Esophagus muscularis mucosa (tissue), 4 donors: ENCODE measurements at regions of chr2 and their contacts with region 1.

Region 1: DNA sequence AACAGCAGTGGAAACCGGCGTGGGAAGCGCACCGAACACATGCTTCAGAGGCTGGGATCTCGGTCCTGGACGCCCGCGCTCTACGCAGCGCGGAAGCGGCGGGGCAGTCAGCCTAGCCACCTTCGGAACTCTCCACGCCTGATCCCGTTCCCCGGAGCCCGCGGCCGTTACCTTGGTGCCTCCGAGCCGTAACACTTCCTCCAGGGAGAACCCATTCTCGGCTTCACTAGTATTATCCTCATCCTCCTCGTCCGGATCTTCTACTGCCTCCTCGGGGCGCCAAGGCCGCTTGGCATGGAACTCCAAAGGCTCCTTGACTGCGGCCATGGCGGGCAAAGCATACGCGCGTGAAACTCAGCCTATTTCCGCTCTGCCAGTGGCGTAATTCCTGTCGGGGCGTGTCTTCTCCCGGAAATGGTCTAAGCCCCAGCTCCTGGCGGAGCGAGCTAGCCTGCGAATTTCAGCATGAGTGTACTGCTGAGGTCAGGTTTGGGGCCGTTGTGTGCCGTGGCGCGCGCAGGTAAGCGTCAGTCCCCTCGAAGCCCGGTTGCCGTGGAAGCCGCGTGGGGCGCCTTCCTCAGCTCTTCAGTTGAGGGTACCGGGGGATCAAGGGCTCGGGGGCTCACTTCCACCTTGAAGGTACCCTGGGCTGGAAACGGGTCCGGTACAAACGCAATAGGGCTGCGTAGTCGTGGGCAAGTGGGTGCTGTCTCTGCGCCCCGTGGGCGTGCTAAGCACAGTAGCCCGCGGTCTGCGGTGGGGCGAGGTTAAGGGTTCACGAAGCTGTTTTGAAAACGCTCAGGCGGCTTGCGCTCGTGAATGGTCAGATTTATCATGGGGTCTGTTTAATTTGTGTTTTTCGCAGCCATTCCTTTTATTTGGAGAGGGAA is at the starts of genes CEBPZ and NDUFAF7:
- DNase-seq: peak; percentile 98
- H3K4me3 ChIP-seq: peak within 1 kb of the TSS; percentile 85 to 96 (median 91)
- H3K27ac ChIP-seq: peak within 1 kb of the TSS; percentile 89 to 95 (median 94)
- H3K4me1 ChIP-seq: peaks cover 24 to 47% (median 39%) of the 10 kb centered on the region in 4 donors
- H3K27me3 ChIP-seq: no peaks in the 10 kb centered on the region
- CTCF ChIP-seq: no peak
- EP300 ChIP-seq: no peak
- POLR2A ChIP-seq: no peak
- total RNA-seq, gene CEBPZ: 22.4 to 34.5 (median 30.0) TPM
- total RNA-seq, gene NDUFAF7: 12.3 to 16.3 (median 13.4) TPM

Region 2: GRCh38 chr2:37156857-37157714 is 74.4 kb before region 1 on chr2 and contains the start of gene EIF2AK2:
- intact Hi-C with region 1: loop called (anchors 5 kb)
- DNase-seq: no peak
- H3K4me3 ChIP-seq: peak within 1 kb of the TSS; percentile 70 to 100 (median 90)
- H3K27ac ChIP-seq: peak within 1 kb of the TSS; percentile 86 to 95 (median 92)
- H3K4me1 ChIP-seq: peaks cover 11 to 31% (median 23%) of the 10 kb centered on the region in 4 donors
- H3K27me3 ChIP-seq: no peaks in the 10 kb centered on the region
- CTCF ChIP-seq: no peak
- EP300 ChIP-seq: no peak
- POLR2A ChIP-seq: no peak
- total RNA-seq, gene EIF2AK2: 23.7 to 28.4 (median 27.8) TPM

Region 3: DNA sequence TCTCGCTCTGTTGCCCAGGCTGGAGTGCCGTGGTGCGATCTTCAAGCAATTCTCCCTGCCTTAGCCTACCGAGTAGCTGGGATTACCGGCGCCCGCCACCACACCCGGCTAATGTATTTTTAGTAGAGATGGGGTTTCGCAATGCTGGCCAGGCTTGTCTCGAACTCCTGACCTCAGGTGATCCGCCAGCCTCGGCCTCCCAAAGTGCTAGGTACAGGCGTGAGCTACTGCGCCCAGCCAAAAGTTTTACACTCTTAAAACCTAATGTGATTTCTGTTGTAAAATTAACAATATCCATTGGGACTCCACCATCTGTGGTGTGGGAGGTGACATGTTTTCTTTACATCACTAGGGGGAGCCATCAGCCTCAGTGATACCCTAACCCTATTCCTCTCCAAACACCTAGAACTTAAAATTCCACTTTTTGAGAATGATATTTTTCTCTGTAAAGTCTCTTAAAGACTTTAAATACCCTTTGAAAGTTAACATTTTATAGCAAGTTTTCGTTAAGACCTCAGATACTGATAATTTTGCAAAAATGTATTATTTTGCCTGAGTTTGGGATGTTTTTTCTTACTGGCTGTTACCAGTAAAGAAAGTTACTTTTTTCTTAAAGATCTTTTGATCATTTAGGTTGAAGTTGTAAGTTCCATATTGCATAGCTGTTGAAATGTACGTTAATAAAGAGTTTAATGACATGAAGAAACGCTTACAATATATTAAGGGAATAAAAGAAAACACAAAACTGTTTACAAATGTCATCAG is 63.1 kb before region 1 on chr2:
- intact Hi-C with region 1: no loop called
- DNase-seq: no peak
- H3K4me3 ChIP-seq: no peak overlapping the region
- H3K27ac ChIP-seq: no peak overlapping the region
- H3K4me1 ChIP-seq: no peaks in the 10 kb centered on the region
- H3K27me3 ChIP-seq: no peaks in the 10 kb centered on the region
- CTCF ChIP-seq: peak; percentile 45 to 65 (median 49)
- EP300 ChIP-seq: no peak
- POLR2A ChIP-seq: no peak

Region 4: GRCh38 chr2:37196320-37197195 is 34.9 kb before region 1 on chr2 and contains the start of gene CEBPZOS:
- intact Hi-C with region 1: loop called (anchors 5 kb)
- DNase-seq: peak; percentile 94
- H3K4me3 ChIP-seq: peak within 1 kb of the TSS; percentile 81 to 90 (median 85)
- H3K27ac ChIP-seq: peak within 1 kb of the TSS; percentile 87 to 95 (median 92)
- H3K4me1 ChIP-seq: peaks cover 12 to 30% (median 23%) of the 10 kb centered on the region in 4 donors
- H3K27me3 ChIP-seq: no peaks in the 10 kb centered on the region
- CTCF ChIP-seq: no peak
- EP300 ChIP-seq: no peak
- POLR2A ChIP-seq: peak; percentile 53
- total RNA-seq, gene CEBPZOS: 25.2 to 31.6 (median 28.2) TPM

Region 5: GRCh38 chr2:37324786-37325624 is 93.5 kb after region 1 on chr2 and contains the start of gene PRKD3:
- intact Hi-C with region 1: loop called (anchors 5 kb)
- DNase-seq: peak; percentile 92
- H3K4me3 ChIP-seq: peak within 1 kb of the TSS; percentile 75 to 94 (median 87)
- H3K27ac ChIP-seq: peak within 1 kb of the TSS; percentile 93 to 94 (median 94)
- H3K4me1 ChIP-seq: peaks cover 30 to 50% (median 42%) of the 10 kb centered on the region in 4 donors
- H3K27me3 ChIP-seq: no peaks in the 10 kb centered on the region
- CTCF ChIP-seq: no peak
- EP300 ChIP-seq: no peak
- POLR2A ChIP-seq: peak; percentile 46
- total RNA-seq, gene PRKD3: 31.8 to 47.3 (median 36.3) TPM

Region 6: GRCh38 chr2:37337642-37338310 is 106.3 kb after region 1 on chr2:
- intact Hi-C with region 1: no loop called
- DNase-seq: no peak
- H3K4me3 ChIP-seq: no peak overlapping the region
- H3K27ac ChIP-seq: no peak overlapping the region
- H3K4me1 ChIP-seq: no peaks in the 10 kb centered on the region
- H3K27me3 ChIP-seq: no peaks in the 10 kb centered on the region
- CTCF ChIP-seq: no peak
- EP300 ChIP-seq: no peak
- POLR2A ChIP-seq: no peak

Region 7: GRCh38 chr2:37832590-37833197 is 601.2 kb after region 1 on chr2:
- intact Hi-C with region 1: no loop called
- DNase-seq: peak; percentile 96
- H3K4me3 ChIP-seq: no peak overlapping the region
- H3K27ac ChIP-seq: peak overlapping the region in 3 of 4 donors; percentile 20 to 61 (median 48)
- H3K4me1 ChIP-seq: peaks cover 6 to 57% (median 39%) of the 10 kb centered on the region in 4 donors
- H3K27me3 ChIP-seq: no peaks in the 10 kb centered on the region
- CTCF ChIP-seq: peak; percentile 82 to 90 (median 84)
- EP300 ChIP-seq: no peak
- POLR2A ChIP-seq: no peak